ENCODE measurements at regions of chr2 and their contacts with region 1.

Region 1: GRCh38 chr2:179340668-179341067 is 76.0 kb upstream of the SESTD1 start:
- DNase-seq: peak; percentile 54
- ATAC-seq: peak; percentile 15; the same call in 2 of the 3 replicates
- H3K4me3 ChIP-seq: no peak overlapping the region
- H3K27ac ChIP-seq: no peak overlapping the region
- H3K4me1 ChIP-seq: peaks cover 59% of the 10 kb centered on the region
- H3K27me3 ChIP-seq: no peaks in the 10 kb centered on the region
- CTCF ChIP-seq: peak; percentile 72
- EP300 ChIP-seq: no peak
- POLR2A ChIP-seq: no peak
- RAD21 ChIP-seq: peak; percentile 57; the same call in 1 of the 2 replicates

Region 2: GRCh38 chr2:179218848-179219594 is 121.6 kb before region 1 on chr2:
- CTCF ChIA-PET with region 1: interaction called, 11 read pairs
- POLR2A ChIA-PET with region 1: no interaction called
- in situ Hi-C with region 1: loop called (anchors 5 kb)
- intact Hi-C with region 1: loop called (anchors 1 kb)
- DNase-seq: peak; percentile 73
- ATAC-seq: peak; percentile 94
- H3K4me3 ChIP-seq: no peak overlapping the region
- H3K27ac ChIP-seq: no peak overlapping the region
- H3K4me1 ChIP-seq: no peaks in the 10 kb centered on the region; the same call in 1 of the 2 replicates
- H3K27me3 ChIP-seq: no peaks in the 10 kb centered on the region
- CTCF ChIP-seq: peak; percentile 92
- EP300 ChIP-seq: no peak
- POLR2A ChIP-seq: no peak
- RAD21 ChIP-seq: peak; percentile 86

Region 3: GRCh38 chr2:179239195-179239594 is 101.5 kb before region 1 on chr2:
- CTCF ChIA-PET with region 1: no interaction called
- POLR2A ChIA-PET with region 1: interaction called, 7 read pairs
- in situ Hi-C with region 1: no loop called
- intact Hi-C with region 1: loop called (anchors 2 kb)
- DNase-seq: peak; percentile 88
- ATAC-seq: peak; percentile 75
- H3K4me3 ChIP-seq: peak overlapping the region in 2 of 3 experiments; percentile 12 to 24; a peak in 2 of 6 replicates
- H3K27ac ChIP-seq: peak overlapping the region; percentile 55
- H3K4me1 ChIP-seq: peaks cover 90% of the 10 kb centered on the region
- H3K27me3 ChIP-seq: no peaks in the 10 kb centered on the region
- CTCF ChIP-seq: no peak
- EP300 ChIP-seq: peak in 1 of 2 experiments; percentile 95; a peak in 2 of 4 replicates
- POLR2A ChIP-seq: no peak
- RAD21 ChIP-seq: no peak

Region 4: GRCh38 chr2:179264368-179265081 is 76.1 kb before region 1 on chr2 and contains the start of gene SESTD1:
- CTCF ChIA-PET with region 1: interaction called, 3 read pairs
- POLR2A ChIA-PET with region 1: interaction called, 3 read pairs
- in situ Hi-C with region 1: no loop called
- intact Hi-C with region 1: loop called (anchors 1 kb)
- DNase-seq: peak; percentile 68
- ATAC-seq: peak; percentile 86
- H3K4me3 ChIP-seq: peak within 1 kb of the TSS; percentile 86 to 98 (median 96)
- H3K27ac ChIP-seq: peak within 1 kb of the TSS; percentile 87
- H3K4me1 ChIP-seq: peaks cover 68% of the 10 kb centered on the region
- H3K27me3 ChIP-seq: no peaks in the 10 kb centered on the region; a peak in 1 of 5 replicates
- CTCF ChIP-seq: no peak
- EP300 ChIP-seq: peak in 1 of 2 experiments; percentile 9; a peak in 1 of 4 replicates
- POLR2A ChIP-seq: peak in 1 of 2 experiments; percentile 66; a peak in 3 of 4 replicates
- RAD21 ChIP-seq: 0 out of 2 replicates have a peak, but pooled peaks have one; percentile 36
- total RNA-seq, gene SESTD1: 74.4 and 105 TPM in 2 replicates

Region 5: GRCh38 chr2:179272406-179273192 is 68.1 kb before region 1 on chr2:
- CTCF ChIA-PET with region 1: no interaction called
- POLR2A ChIA-PET with region 1: interaction called, 24 read pairs
- in situ Hi-C with region 1: no loop called
- intact Hi-C with region 1: no loop called
- DNase-seq: peak; percentile 96
- ATAC-seq: peak; percentile 84
- H3K4me3 ChIP-seq: peak overlapping the region; percentile 9 to 52 (median 52); a peak in 4 of 6 replicates
- H3K27ac ChIP-seq: peak overlapping the region; percentile 93
- H3K4me1 ChIP-seq: peaks cover 90% of the 10 kb centered on the region
- H3K27me3 ChIP-seq: no peaks in the 10 kb centered on the region
- CTCF ChIP-seq: no peak
- EP300 ChIP-seq: peak in 1 of 2 experiments; percentile 96; a peak in 2 of 4 replicates
- POLR2A ChIP-seq: no peak
- RAD21 ChIP-seq: no peak

Region 6: DNA sequence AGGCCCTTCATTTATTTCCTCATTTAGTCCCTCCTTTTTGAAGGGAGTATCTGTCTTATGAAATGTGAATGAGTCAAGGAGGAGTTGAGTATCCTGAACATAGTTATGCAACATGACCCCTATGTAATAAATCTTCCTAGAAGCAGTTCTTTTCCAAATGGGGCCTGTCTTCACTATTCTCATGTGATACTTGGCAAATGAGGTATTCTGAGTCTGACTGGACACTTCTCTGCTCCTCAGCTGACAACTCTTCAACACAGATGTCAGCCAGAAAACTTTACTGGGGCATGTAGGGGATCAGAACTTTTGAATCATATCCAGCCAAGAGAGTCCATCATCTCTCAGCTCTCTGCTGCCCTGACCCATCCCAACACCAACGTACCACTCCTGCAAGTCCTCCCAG is 229.2 kb after region 1 on chr2:
- CTCF ChIA-PET with region 1: no interaction called
- POLR2A ChIA-PET with region 1: no interaction called
- in situ Hi-C with region 1: no loop called
- intact Hi-C with region 1: loop called (anchors 10 kb)
- DNase-seq: no peak
- ATAC-seq: no peak
- H3K4me3 ChIP-seq: no peak overlapping the region
- H3K27ac ChIP-seq: no peak overlapping the region
- H3K4me1 ChIP-seq: peaks cover 57% of the 10 kb centered on the region
- H3K27me3 ChIP-seq: no peaks in the 10 kb centered on the region
- CTCF ChIP-seq: no peak
- EP300 ChIP-seq: no peak
- POLR2A ChIP-seq: no peak
- RAD21 ChIP-seq: no peak